ENCODE measurements at regions of chr12 and their contacts with region 1.

Region 1: DNA sequence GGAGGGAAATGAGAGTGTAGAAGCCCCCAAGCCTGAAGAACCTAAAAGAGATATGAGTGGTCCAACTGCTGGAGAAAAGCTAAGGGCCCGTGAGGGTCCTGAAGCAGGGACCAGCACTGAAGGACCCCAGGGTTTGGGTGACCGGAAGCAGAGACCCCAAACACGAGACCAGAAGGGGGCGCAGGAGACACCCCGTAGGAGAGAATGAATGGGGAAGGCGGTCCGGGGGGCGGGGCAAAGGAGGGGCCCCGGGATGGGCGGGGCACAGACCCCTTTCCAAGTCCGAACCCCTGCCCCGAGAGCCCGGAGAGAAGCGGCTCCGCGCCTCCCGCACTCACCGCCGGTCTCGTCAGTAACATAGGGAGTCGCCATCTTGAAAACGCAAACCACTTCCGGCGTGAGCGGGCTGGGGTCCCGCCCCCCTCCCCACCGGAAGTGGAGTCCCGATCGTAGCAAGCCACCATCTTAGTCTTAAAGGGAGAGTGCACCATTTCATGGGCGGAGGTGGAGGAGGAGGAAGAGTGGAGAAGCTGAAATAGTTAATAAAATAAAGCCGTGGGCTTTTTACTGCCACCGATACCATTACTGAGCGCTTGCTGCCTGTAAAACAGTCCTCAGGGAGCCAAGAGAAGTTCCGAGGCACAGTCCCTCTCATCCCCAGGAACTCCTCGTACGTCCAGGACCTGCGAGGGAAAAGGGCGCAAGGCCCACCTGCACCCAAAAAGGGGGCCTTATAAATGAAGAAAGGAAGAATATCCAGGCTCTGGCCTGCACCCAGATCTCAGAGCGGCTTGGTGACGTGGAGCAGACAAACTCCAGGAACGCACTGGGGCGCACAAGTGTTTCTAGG is 731 bp downstream of the PYM1 start:
- DNase-seq: peak; percentile 87 to 91 (median 89)
- ATAC-seq: peak; percentile 87 to 91 (median 89)
- H3K4me3 ChIP-seq: peak overlapping the region; percentile 53 to 95 (median 82)
- H3K27ac ChIP-seq: peak overlapping the region; percentile 81 to 98 (median 97)
- H3K4me1 ChIP-seq: peaks cover 0 to 53% (median 34%) of the 10 kb centered on the region in 12 donors
- H3K27me3 ChIP-seq: no peaks in the 10 kb centered on the region
- CTCF ChIP-seq: peak; percentile 38 to 96 (median 77)
- POLR2A ChIP-seq: peak in 1 of 2 donors; percentile 51

Region 2: GRCh38 chr12:55760663-55761062 is 166.3 kb before region 1 on chr12:
- intact Hi-C with region 1: no loop called
- DNase-seq: no peak
- ATAC-seq: no peak
- H3K4me3 ChIP-seq: no peak overlapping the region
- H3K27ac ChIP-seq: no peak overlapping the region
- H3K4me1 ChIP-seq: no peaks in the 10 kb centered on the region
- H3K27me3 ChIP-seq: no peaks in the 10 kb centered on the region
- CTCF ChIP-seq: no peak
- POLR2A ChIP-seq: no peak

Region 3: GRCh38 chr12:55829967-55830600 is 96.9 kb before region 1 on chr12:
- intact Hi-C with region 1: loop called in 8 of 10 experiments (anchors 1 to 5 kb)
- DNase-seq: peak; percentile 45 to 70 (median 55)
- ATAC-seq: peak; percentile 19 to 47 (median 37)
- H3K4me3 ChIP-seq: peak overlapping the region; percentile 72 to 97 (median 88)
- H3K27ac ChIP-seq: peak overlapping the region; percentile 87 to 95 (median 92)
- H3K4me1 ChIP-seq: peaks cover 0 to 53% (median 34%) of the 10 kb centered on the region in 12 donors
- H3K27me3 ChIP-seq: no peaks in the 10 kb centered on the region
- CTCF ChIP-seq: no peak
- POLR2A ChIP-seq: no peak

Region 4: DNA sequence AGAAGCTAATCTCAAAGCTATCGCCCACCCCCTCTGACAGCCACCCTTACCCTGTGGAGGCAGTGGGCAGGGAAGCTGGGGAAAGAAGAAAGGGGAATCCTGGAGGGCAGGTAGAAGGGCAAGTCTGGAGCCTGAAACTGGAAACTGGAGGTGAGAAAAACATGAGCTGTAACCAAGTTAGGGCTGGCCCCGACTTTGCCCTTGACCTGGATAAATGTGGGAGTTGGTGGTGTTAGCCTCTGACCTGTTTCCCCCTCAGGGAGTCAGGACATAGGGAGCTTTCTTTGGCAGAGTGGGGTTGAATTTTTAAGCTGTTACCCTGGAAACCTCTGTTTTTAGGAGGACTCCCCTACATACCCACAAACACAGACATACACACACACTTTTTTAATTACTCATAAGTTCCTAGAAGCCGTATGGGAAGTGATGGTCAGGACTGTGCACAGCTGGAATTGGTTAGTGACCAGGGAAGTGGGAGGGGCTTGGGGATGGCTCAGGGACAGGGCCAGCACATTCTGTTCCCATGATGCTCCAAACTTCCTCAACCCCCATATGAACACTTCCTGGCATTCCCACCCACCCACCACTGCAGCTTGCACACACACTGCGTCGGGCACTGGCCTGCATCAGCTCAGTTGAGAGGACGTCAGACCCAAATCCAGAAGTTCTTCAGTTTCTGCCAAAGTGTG is 79.2 kb before region 1 on chr12:
- intact Hi-C with region 1: loop called in 3 of 10 experiments (anchors 2 to 5 kb)
- DNase-seq: peak; percentile 85 to 96 (median 89)
- ATAC-seq: peak; percentile 92 to 98 (median 96)
- H3K4me3 ChIP-seq: peak overlapping the region in 8 of 12 donors; percentile 23 to 45 (median 32)
- H3K27ac ChIP-seq: peak overlapping the region; percentile 81 to 96 (median 90)
- H3K4me1 ChIP-seq: peaks cover 0 to 65% (median 14%) of the 10 kb centered on the region in 12 donors
- H3K27me3 ChIP-seq: peaks cover 0 to 4% (median 0%) of the 10 kb centered on the region in 9 donors
- CTCF ChIP-seq: no peak
- POLR2A ChIP-seq: peak in 1 of 2 donors; percentile 65

Region 5: DNA sequence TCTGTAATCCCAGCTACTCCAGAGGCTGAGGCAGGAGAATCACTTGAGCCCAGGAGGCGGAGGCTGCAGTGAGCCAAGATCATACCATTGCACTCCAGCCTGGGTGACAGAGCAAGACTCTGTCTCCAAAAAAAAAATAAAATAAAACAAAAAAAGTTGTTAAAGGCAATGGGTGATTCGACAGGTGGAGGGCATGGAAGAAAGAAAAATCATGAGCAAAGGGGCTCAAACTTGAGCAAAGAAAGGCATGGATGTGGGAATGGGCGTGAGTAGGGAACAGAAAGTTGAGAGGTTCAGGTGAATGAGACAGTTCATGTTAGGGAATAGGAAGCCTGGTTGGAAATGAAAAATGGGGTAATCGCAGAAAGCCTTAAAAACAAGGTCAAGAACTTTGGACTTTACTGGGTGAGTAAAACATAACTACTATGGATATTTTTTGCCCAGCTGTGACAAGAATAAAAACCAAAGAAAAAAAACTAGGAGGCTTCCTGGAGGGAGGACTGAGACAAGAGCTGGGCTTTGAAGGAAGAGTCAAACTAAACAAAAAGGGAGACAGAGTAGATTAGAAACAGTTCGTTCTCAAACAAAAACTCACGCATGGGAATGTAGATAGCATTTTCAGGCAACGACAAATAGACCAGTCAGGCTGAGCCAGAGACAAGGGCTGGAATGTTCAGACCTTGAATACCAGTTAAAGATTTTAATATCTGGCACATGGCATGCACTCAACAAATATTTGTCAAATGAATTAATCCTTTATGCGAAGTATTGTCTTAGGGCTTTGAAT is 18.0 kb before region 1 on chr12:
- intact Hi-C with region 1: loop called in 1 of 10 experiments (anchors 1 kb)
- DNase-seq: no peak
- ATAC-seq: no peak
- H3K4me3 ChIP-seq: no peak overlapping the region
- H3K27ac ChIP-seq: peak overlapping the region in 5 of 12 donors; percentile 25 to 59 (median 50)
- H3K4me1 ChIP-seq: peaks cover 0 to 27% (median 7%) of the 10 kb centered on the region in 12 donors
- H3K27me3 ChIP-seq: no peaks in the 10 kb centered on the region
- CTCF ChIP-seq: no peak
- POLR2A ChIP-seq: no peak

Region 6: GRCh38 chr12:55966408-55967281 is 39.7 kb after region 1 on chr12 and contains the start of gene CDK2:
- intact Hi-C with region 1: loop called in 4 of 10 experiments (anchors 5 kb)
- DNase-seq: peak; percentile 95
- ATAC-seq: peak; percentile 94 to 99 (median 97)
- H3K4me3 ChIP-seq: peak within 1 kb of the TSS; percentile 49 to 98 (median 76)
- H3K27ac ChIP-seq: peak within 1 kb of the TSS in 11 of 12 donors; percentile 74 to 88 (median 81)
- H3K4me1 ChIP-seq: peaks cover 0 to 25% (median 14%) of the 10 kb centered on the region in 12 donors
- H3K27me3 ChIP-seq: no peaks in the 10 kb centered on the region
- CTCF ChIP-seq: no peak
- POLR2A ChIP-seq: peak; percentile 15 to 81
- total RNA-seq, gene CDK2: 3.7 to 16.7 (median 11.3) TPM

Region 7: GRCh38 chr12:55973598-55974307 is 46.8 kb after region 1 on chr12 and contains the start of gene RAB5B:
- intact Hi-C with region 1: loop called in 4 of 10 experiments (anchors 5 kb)
- DNase-seq: peak; percentile 98 to 100 (median 100)
- ATAC-seq: peak; percentile 94 to 96 (median 95)
- H3K4me3 ChIP-seq: peak within 1 kb of the TSS; percentile 84 to 100 (median 92)
- H3K27ac ChIP-seq: peak within 1 kb of the TSS; percentile 84 to 99 (median 96)
- H3K4me1 ChIP-seq: peaks cover 0 to 55% (median 30%) of the 10 kb centered on the region in 12 donors
- H3K27me3 ChIP-seq: no peaks in the 10 kb centered on the region
- CTCF ChIP-seq: peak in 8 of 12 donors; percentile 9 to 51 (median 34)
- POLR2A ChIP-seq: peak; percentile 96 to 99
- total RNA-seq, gene RAB5B: 97.5 to 135 (median 119) TPM